WTC11 (cell line): ENCODE measurements at regions of chr2 and their contacts with region 1.

Region 1: DNA sequence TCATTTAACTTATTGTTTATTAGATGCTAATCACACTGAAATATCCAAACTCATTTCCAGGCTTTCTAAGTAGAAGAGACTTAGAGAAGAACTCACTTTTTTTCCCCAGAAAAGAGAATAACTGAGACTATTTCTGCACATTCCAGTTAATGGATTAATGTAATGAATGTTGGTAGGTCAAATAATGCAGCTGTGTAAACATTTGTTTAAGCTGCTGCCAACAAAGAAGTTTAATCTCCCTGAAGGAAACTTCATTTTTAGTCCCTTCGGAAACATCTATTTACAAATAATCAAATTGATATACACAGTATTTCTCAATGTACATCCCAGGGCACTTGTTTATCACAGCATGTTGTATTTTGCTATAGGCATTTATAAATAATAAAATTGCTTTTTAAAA is 126.9 kb downstream of the KCNS3 start:
- DNase-seq: no peak
- ATAC-seq: no peak
- H3K4me3 Mint-ChIP-seq: no peak overlapping the region
- H3K27ac Mint-ChIP-seq: no peak overlapping the region
- H3K4me1 Mint-ChIP-seq: no peaks in the 10 kb centered on the region
- H3K27me3 Mint-ChIP-seq: no peaks in the 10 kb centered on the region
- CTCF ChIP-seq: no peak

Region 2: DNA sequence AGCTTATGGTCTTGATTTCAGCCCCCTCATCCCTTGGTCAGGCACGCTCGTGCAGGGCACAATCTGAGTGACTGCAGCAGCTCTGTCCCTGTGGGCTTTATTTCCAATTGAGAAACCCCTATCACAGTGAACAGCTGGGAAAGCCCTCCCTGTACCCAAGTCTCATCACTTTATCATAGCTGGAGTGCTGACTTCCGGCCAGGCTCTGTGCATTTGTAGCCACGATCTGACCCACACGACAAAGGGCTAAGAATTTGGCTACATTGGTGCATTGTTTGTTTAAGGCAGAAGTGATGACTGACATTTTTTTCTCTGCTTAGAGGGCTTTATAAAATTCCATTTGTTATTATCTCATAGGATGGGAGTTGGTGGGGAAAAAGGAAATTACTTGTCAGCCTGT is 57.5 kb after region 1 on chr2:
- CTCF ChIA-PET with region 1: no interaction called
- POLR2A ChIA-PET with region 1: interaction called, 10 read pairs
- DNase-seq: no peak
- ATAC-seq: no peak
- H3K4me3 Mint-ChIP-seq: no peak overlapping the region
- H3K27ac Mint-ChIP-seq: no peak overlapping the region
- H3K4me1 Mint-ChIP-seq: peaks cover 12% of the 10 kb centered on the region
- H3K27me3 Mint-ChIP-seq: no peaks in the 10 kb centered on the region; the same call in 1 of the 2 replicates
- CTCF ChIP-seq: no peak